HCT116 (cell line): ENCODE measurements at regions of chr5 and their contacts with region 1.

Region 1: DNA sequence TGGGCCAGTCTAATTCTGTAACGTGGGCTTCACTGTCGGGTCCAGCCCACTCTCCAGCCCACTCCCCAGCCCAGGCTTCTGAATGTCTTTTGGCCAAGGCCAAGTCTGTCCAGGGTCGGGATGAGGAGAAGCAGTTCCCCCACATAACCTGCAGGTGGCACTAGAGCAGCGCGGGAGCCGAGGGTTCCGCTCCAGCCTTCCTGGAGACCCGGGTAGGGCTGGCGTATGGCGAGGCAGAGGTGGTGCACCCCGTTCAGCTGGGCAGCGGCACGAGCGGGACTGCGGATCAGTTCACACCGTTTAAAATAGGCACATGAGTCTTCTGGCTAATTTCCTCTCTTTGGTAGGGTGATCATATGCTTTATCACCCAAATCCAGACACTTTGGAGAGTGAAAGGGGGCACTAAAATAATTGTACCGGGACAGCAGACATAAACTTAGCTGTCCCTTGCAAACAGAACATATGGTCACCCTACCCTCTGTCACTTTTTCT is 185.9 kb downstream of the MSX2 start:
- DNase-seq: peak; percentile 49
- ATAC-seq: peak; percentile 100
- H3K4me3 ChIP-seq: peak overlapping the region; percentile 15; a peak in 2 of 4 replicates
- H3K27ac ChIP-seq: no peak overlapping the region
- H3K4me1 ChIP-seq: peaks cover 0 to 4% of the 10 kb centered on the region in 2 experiments; a peak in 1 of 4 replicates
- H3K27me3 ChIP-seq: no peaks in the 10 kb centered on the region
- CTCF ChIP-seq: peak; percentile 74 to 96 (median 93)
- POLR2A ChIP-seq: no peak
- RAD21 ChIP-seq: peak; percentile 95

Region 2: DNA sequence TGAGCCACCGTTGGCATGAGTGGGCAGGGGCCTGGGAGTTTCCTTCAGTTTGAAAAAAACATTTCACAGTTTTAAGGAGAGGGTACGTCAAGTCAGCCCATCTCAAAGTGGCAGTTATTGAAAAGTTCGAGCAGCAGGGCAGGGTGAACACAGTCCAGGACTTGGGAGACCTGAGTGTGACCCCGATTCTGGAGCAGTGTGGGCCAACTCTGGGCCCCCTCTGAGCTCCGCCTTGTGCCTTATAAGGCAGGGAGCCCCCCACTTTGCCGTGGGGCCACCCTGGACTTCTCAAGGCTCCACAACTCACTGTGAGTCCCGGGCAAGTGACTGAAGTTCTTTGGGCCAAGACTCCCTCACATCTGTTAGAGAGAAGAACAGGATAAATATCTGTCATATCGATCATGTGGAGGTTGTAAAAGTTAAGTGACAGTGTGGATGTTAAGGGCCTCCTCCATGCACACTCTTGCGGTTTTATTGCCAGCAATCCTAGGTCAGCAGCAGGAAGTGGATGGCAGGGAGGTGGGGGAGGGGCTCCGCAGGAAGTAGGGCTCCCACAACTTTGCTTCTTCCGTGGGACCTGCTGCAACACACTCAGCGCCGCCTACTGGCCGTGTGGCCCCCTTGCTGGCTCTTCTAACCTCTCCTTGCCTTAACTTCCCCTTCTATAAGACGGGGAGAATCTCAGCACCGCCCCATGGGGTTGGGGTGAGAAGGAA is 786.0 kb after region 1 on chr5:
- CTCF ChIA-PET with region 1: no interaction called
- POLR2A ChIA-PET with region 1: no interaction called
- RAD21 ChIA-PET with region 1: no interaction called
- intact Hi-C with region 1: loop called (anchors 1 kb)
- DNase-seq: peak; percentile 76
- ATAC-seq: peak; percentile 92
- H3K4me3 ChIP-seq: peak overlapping the region; percentile 42 to 66
- H3K27ac ChIP-seq: peak overlapping the region; percentile 42
- H3K4me1 ChIP-seq: peaks cover 3 to 14% of the 10 kb centered on the region in 2 experiments; a peak in 3 of 4 replicates
- H3K27me3 ChIP-seq: 0 out of 2 replicates have a peak, but pooled peaks cover 2% of the 10 kb centered on the region
- CTCF ChIP-seq: peak; percentile 93 to 98 (median 96)
- POLR2A ChIP-seq: peak; percentile 33
- RAD21 ChIP-seq: peak; percentile 80